BJ (cell line): ENCODE measurements at regions of chr15 and their contacts with region 1.

Region 1: DNA sequence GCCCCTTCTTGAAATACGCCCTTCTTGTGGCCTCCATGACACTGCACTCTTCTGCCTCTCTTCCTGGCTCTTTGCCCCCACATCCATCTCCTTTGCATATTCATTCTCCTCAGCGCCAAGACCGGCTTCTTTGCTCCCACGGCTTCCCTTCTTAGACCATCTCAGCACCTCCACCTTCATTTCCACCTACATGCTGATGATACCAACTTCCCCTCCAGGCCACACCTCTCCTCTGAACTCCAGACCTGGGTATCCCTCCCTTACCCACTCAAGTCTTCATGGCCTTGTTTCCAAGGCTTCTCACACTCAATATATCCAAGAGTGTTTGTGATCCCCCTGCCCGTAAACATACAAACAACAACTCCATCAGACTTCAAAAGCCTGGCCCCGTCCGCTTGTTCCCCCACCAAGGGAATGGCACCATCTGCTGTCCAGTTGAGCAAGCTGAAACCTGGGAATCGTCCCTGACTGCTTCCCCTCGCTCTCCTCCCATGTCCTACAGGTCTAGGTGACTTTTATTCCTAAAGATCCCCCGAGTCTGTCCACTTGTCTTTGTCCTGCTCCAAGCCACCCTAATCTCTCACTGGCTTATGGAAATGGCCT is 27.8 kb upstream of the FAM174B start:
- DNase-seq: no peak
- H3K4me3 ChIP-seq: no peak overlapping the region
- H3K27me3 ChIP-seq: no peaks in the 10 kb centered on the region; the same call in 1 of the 2 replicates
- CTCF ChIP-seq: peak; percentile 43

Region 2: DNA sequence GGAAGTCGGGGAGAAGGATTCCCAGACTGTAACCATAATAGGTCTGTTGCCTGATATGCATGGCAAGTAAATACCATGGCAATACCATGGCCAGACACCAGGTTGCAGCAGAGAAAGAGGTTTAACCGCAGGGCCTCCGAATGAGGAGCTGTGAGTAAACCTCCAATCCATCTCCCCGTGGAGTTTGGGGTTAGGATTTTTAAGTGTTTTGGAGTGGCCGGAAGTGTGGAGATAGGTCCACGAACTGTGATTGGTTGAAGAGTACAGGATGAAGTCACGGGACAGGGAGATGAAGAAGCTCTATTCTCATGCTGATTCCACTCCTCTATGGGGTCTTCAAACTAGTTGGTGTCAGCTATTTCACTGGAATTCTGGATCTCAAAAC is 161.7 kb before region 1 on chr15:
- CTCF ChIA-PET with region 1: interaction called, 12 read pairs
- POLR2A ChIA-PET with region 1: no interaction called
- DNase-seq: peak; percentile 33
- H3K4me3 ChIP-seq: no peak overlapping the region
- H3K27me3 ChIP-seq: no peaks in the 10 kb centered on the region
- CTCF ChIP-seq: peak; percentile 70

Region 3: GRCh38 chr15:92714477-92715401 is 31.4 kb after region 1 on chr15:
- CTCF ChIA-PET with region 1: interaction called, 15 read pairs
- POLR2A ChIA-PET with region 1: no interaction called
- DNase-seq: no peak
- H3K4me3 ChIP-seq: peak overlapping the region; percentile 48
- H3K27me3 ChIP-seq: no peaks in the 10 kb centered on the region; the same call in 1 of the 2 replicates
- CTCF ChIP-seq: peak; percentile 89